OCI-LY7 (cell line): ENCODE measurements at regions of chr17 and their contacts with region 1.

Region 1: GRCh38 chr17:16135461-16135860 is 79.9 kb downstream of the NCOR1 start:
- DNase-seq: no peak
- H3K4me3 ChIP-seq: no peak overlapping the region
- H3K27ac ChIP-seq: no peak overlapping the region
- H3K4me1 ChIP-seq: no peaks in the 10 kb centered on the region
- CTCF ChIP-seq: no peak

Region 2: DNA sequence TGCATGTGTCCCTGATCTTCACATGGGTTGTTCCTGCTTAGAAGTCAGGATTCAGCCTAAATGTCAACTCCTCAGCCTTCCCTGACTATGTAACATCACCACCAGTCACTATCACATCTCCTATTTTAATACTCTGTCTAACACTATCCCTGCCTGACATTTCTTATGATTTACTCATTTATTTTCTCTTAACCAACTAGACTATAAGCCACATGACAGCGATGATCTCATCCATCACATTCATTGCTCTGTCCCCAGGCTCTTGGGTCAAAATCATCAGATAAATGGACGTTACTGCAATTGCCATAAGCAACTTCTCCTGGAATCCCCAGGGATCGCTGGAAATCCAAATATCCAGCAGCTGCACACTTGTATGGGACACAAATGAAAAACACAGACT is 683.8 kb before region 1 on chr17:
- CTCF ChIA-PET with region 1: no interaction called
- POLR2A ChIA-PET with region 1: interaction called, 10 read pairs
- intact Hi-C with region 1: no loop called
- DNase-seq: no peak
- H3K4me3 ChIP-seq: no peak overlapping the region
- H3K27ac ChIP-seq: no peak overlapping the region
- H3K4me1 ChIP-seq: no peaks in the 10 kb centered on the region
- CTCF ChIP-seq: no peak

Region 3: DNA sequence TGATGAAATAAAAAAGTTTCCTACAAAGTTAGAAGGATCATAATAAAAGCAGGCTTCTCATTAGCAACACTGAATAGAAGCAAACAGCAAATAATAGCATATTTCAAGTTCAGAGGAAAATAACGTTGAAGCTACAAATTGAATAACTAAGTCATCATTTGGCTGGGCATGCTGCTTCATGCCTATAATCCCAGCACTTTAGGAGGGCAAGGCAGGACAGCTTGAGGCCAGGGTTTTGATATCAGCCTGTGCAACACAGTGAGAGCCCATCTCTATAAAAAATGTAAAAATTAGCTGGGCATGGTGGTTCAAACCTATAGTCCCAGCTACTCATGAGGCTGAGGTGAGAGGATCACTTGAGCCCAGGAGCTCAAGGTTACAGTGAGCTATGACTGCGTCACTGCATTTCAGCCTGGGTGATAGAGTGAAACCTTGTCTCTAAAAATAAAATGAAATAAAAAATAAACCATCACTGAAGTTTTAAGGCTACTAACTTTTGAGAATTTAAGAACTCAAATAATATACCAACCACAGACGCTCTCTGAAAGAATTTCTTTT is 54.4 kb after region 1 on chr17:
- CTCF ChIA-PET with region 1: no interaction called
- POLR2A ChIA-PET with region 1: no interaction called
- intact Hi-C with region 1: no loop called
- DNase-seq: no peak
- H3K4me3 ChIP-seq: no peak overlapping the region
- H3K27ac ChIP-seq: no peak overlapping the region
- H3K4me1 ChIP-seq: peaks cover 15% of the 10 kb centered on the region
- CTCF ChIP-seq: no peak

Region 4: GRCh38 chr17:16255481-16255921 is 120.0 kb after region 1 on chr17:
- CTCF ChIA-PET with region 1: no interaction called
- POLR2A ChIA-PET with region 1: no interaction called
- intact Hi-C with region 1: no loop called
- DNase-seq: no peak
- H3K4me3 ChIP-seq: no peak overlapping the region
- H3K27ac ChIP-seq: no peak overlapping the region
- H3K4me1 ChIP-seq: no peaks in the 10 kb centered on the region
- CTCF ChIP-seq: no peak